T-cell (primary cell): ENCODE measurements at regions of chr10 and their contacts with region 1.

Region 1: GRCh38 chr10:121481196-121481595 is 117.0 kb downstream of the FGFR2 start:
- DNase-seq: no peak
- ATAC-seq: no peak
- H3K4me3 ChIP-seq: no peak overlapping the region
- H3K4me3 Mint-ChIP-seq: no peak overlapping the region
- H3K27ac ChIP-seq: no peak overlapping the region
- H3K27ac Mint-ChIP-seq: no peak overlapping the region
- H3K4me1 ChIP-seq: no peaks in the 10 kb centered on the region
- H3K4me1 Mint-ChIP-seq: no peaks in the 10 kb centered on the region
- H3K27me3 ChIP-seq: no peaks in the 10 kb centered on the region
- H3K27me3 Mint-ChIP-seq: no peaks in the 10 kb centered on the region

Region 2: GRCh38 chr10:121310151-121310711 is 171.0 kb before region 1 on chr10:
- CTCF ChIA-PET with region 1: no interaction called
- POLR2A ChIA-PET with region 1: no interaction called
- DNase-seq: no peak
- ATAC-seq: no peak
- H3K4me3 ChIP-seq: no peak overlapping the region
- H3K4me3 Mint-ChIP-seq: no peak overlapping the region
- H3K27ac ChIP-seq: no peak overlapping the region
- H3K27ac Mint-ChIP-seq: no peak overlapping the region
- H3K4me1 ChIP-seq: no peaks in the 10 kb centered on the region
- H3K4me1 Mint-ChIP-seq: no peaks in the 10 kb centered on the region
- H3K27me3 ChIP-seq: no peaks in the 10 kb centered on the region
- H3K27me3 Mint-ChIP-seq: no peaks in the 10 kb centered on the region

Region 3: GRCh38 chr10:121583857-121584256 is 102.7 kb after region 1 on chr10:
- CTCF ChIA-PET with region 1: no interaction called
- POLR2A ChIA-PET with region 1: interaction called in 1 of 2 experiments, 13 read pairs
- DNase-seq: no peak
- ATAC-seq: no peak
- H3K4me3 ChIP-seq: no peak overlapping the region
- H3K4me3 Mint-ChIP-seq: no peak overlapping the region
- H3K27ac ChIP-seq: no peak overlapping the region
- H3K27ac Mint-ChIP-seq: no peak overlapping the region
- H3K4me1 ChIP-seq: no peaks in the 10 kb centered on the region
- H3K4me1 Mint-ChIP-seq: no peaks in the 10 kb centered on the region
- H3K27me3 ChIP-seq: peaks cover 0 to 7% of the 10 kb centered on the region in 2 experiments
- H3K27me3 Mint-ChIP-seq: peaks cover 0 to 8% of the 10 kb centered on the region in 2 donors